Activated CD4-positive, alpha-beta T cell treated with anti-CD3 and anti-CD28 coated beads, Interleukin-2, amount 10 ng/mL, durations not matched to agents 24 days and 14 days (primary cell): ENCODE measurements at regions of chr18 and their contacts with region 1.

Region 1: GRCh38 chr18:62080172-62080905 is 106.5 kb downstream of the PIGN start:
- DNase-seq: no peak
- H3K4me3 Mint-ChIP-seq: no peak overlapping the region
- H3K27ac Mint-ChIP-seq: no peak overlapping the region
- H3K4me1 Mint-ChIP-seq: peaks cover 11% of the 10 kb centered on the region
- H3K27me3 Mint-ChIP-seq: no peaks in the 10 kb centered on the region

Region 2: DNA sequence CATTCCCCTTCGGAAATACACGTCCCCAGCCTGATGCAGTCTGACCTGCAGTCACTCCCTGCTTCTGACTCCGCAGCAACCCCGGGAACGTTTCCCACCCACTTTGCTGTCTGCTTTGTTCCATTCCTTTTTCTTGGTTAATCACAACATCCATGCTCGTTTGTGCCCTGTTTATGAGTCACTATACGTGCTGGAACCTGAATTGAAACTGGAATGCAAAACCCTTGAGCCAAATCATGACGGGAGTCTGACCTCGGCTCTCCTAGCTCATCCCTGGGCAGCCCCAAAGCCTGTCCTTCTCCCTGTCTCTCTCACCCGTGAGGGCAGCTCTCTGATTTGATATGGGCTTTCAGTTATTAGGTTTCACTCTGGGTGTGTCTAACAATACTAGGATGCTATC is 130.4 kb before region 1 on chr18:
- intact Hi-C with region 1: loop called (anchors 5 kb)
- DNase-seq: peak; percentile 51
- H3K4me3 Mint-ChIP-seq: no peak overlapping the region
- H3K27ac Mint-ChIP-seq: no peak overlapping the region
- H3K4me1 Mint-ChIP-seq: peaks cover 38% of the 10 kb centered on the region
- H3K27me3 Mint-ChIP-seq: peaks cover 46% of the 10 kb centered on the region